ENCODE measurements at regions of chr11 and their contacts with region 1.

Region 1: DNA sequence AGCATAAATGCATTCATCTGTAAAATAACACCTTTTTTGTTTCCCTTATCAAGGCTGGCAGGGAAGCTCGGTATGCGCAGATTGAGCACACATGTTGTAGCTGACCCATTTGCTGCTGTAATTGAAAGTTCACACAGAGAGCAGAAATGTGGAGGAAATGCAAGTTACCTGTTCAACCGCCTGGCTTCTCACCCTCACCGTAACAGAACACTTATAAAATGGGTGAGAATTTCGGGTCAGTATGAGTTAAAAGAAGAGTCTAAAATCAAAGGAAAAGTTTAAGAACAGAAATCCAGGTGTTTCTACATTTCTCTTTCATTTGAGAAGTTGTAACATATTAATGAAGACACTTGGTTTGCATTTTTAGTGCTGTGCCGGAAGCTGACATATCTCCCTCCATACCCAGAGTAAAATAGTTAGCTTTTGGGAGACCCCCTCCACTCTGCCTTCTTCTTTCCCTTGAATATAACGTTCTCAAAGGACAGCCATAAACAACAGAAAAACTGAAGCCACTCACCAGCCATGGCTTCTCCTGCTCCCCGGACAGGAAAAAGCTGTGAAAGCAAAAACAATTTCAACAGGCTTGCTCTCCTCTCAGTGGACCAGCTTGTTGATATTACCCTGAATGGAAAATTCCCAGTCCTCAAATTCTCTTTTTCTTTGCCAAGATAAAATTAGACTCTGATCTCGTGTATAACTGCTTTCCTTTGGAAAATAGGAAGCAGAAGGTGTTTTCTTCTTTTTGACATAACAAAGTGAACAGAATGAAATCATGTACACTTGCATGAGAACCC is at the start of gene CASP12:
- DNase-seq: peak in 1 of 9 experiments; percentile 53
- ATAC-seq: peak; percentile 56
- H3K4me3 ChIP-seq: peak within 1 kb of the TSS in 1 of 2 experiments; percentile 21
- H3K4me3 Mint-ChIP-seq: peak within 1 kb of the TSS; percentile 76
- H3K27ac ChIP-seq: peak within 1 kb of the TSS in 1 of 2 experiments; percentile 51
- H3K27ac Mint-ChIP-seq: peak within 1 kb of the TSS; percentile 86
- H3K4me1 ChIP-seq: peaks cover 16% of the 10 kb centered on the region
- H3K4me1 Mint-ChIP-seq: peaks cover 29% of the 10 kb centered on the region
- H3K27me3 ChIP-seq: no peaks in the 10 kb centered on the region
- H3K27me3 Mint-ChIP-seq: no peaks in the 10 kb centered on the region
- CTCF ChIP-seq: no peak
- total RNA-seq, gene CASP12: not detected

Region 2: DNA sequence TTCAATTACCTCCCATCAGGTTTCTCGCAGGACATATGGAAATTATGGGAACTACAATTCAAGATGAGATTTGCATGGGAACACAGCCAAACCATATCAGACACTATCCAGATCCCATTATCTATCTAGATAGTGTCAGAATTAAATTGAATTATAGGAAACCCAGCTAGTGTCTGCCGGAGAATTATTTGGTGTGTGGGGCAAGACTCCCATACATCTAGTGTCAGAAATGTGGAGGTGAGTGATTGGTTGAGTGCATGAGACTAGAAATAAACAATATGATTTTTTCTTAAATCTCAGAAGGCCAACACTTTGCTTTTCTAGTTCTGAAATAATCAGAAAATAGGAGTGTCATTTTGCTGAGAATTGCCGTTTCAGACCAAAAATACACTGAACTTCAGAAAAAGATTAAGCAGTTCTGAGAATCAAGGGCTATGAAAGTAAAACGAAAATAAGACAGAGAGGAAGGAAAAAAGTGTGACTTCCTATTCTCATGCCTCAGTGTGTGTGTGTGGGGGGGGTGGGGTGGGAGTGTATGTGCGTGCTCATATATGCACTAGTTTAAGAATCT is 21.1 kb before region 1 on chr11:
- CTCF ChIA-PET with region 1: no interaction called
- POLR2A ChIA-PET with region 1: interaction called, 5 read pairs
- intact Hi-C with region 1: loop called in 1 of 2 experiments (anchors 2 kb)
- DNase-seq: peak in 2 of 9 experiments; percentile 52 to 69
- ATAC-seq: peak; percentile 72
- H3K4me3 ChIP-seq: peak overlapping the region; percentile 25 to 32
- H3K4me3 Mint-ChIP-seq: peak overlapping the region; percentile 73
- H3K27ac ChIP-seq: peak overlapping the region; percentile 16 to 80
- H3K27ac Mint-ChIP-seq: peak overlapping the region; percentile 79
- H3K4me1 ChIP-seq: peaks cover 24% of the 10 kb centered on the region
- H3K4me1 Mint-ChIP-seq: peaks cover 43% of the 10 kb centered on the region
- H3K27me3 ChIP-seq: no peaks in the 10 kb centered on the region
- H3K27me3 Mint-ChIP-seq: no peaks in the 10 kb centered on the region
- CTCF ChIP-seq: no peak

Region 3: DNA sequence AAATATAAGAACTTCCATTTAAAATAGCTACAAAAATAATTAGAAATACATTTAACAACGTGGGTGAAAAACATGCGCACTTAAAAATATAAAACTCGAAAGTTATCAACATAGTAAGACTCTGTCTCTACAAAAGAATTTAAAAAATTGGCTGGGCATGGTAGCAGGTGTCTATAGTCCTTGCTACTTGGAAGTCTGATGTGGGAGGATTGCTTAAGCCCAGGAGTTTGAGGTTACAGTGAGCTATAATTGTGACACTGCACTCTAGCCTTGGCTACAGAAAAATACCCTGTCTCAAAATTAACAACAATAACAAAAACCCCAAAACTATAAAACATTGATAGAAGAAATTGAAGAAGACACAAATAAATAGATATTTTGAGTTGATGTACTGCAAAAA is 14.0 kb after region 1 on chr11:
- CTCF ChIA-PET with region 1: no interaction called
- POLR2A ChIA-PET with region 1: no interaction called
- intact Hi-C with region 1: loop called in 1 of 2 experiments (anchors 2 kb)
- DNase-seq: no peak
- ATAC-seq: no peak
- H3K4me3 ChIP-seq: no peak overlapping the region
- H3K4me3 Mint-ChIP-seq: no peak overlapping the region
- H3K27ac ChIP-seq: no peak overlapping the region
- H3K27ac Mint-ChIP-seq: no peak overlapping the region
- H3K4me1 ChIP-seq: peaks cover 19% of the 10 kb centered on the region
- H3K4me1 Mint-ChIP-seq: peaks cover 48% of the 10 kb centered on the region
- H3K27me3 ChIP-seq: no peaks in the 10 kb centered on the region
- H3K27me3 Mint-ChIP-seq: no peaks in the 10 kb centered on the region
- CTCF ChIP-seq: no peak

Region 4: GRCh38 chr11:104934594-104934993 is 36.5 kb after region 1 on chr11:
- CTCF ChIA-PET with region 1: no interaction called
- POLR2A ChIA-PET with region 1: no interaction called
- intact Hi-C with region 1: loop called in 1 of 2 experiments (anchors 5 kb)
- DNase-seq: peak in 2 of 9 experiments; percentile 34 to 63
- ATAC-seq: peak; percentile 69
- H3K4me3 ChIP-seq: no peak overlapping the region
- H3K4me3 Mint-ChIP-seq: peak overlapping the region; percentile 68
- H3K27ac ChIP-seq: no peak overlapping the region
- H3K27ac Mint-ChIP-seq: no peak overlapping the region
- H3K4me1 ChIP-seq: peaks cover 17% of the 10 kb centered on the region
- H3K4me1 Mint-ChIP-seq: peaks cover 35% of the 10 kb centered on the region
- H3K27me3 ChIP-seq: no peaks in the 10 kb centered on the region
- H3K27me3 Mint-ChIP-seq: no peaks in the 10 kb centered on the region
- CTCF ChIP-seq: no peak